Ovary (tissue), 10 donors: ENCODE measurements at regions of chr5 and their contacts with region 1.

Region 1: DNA sequence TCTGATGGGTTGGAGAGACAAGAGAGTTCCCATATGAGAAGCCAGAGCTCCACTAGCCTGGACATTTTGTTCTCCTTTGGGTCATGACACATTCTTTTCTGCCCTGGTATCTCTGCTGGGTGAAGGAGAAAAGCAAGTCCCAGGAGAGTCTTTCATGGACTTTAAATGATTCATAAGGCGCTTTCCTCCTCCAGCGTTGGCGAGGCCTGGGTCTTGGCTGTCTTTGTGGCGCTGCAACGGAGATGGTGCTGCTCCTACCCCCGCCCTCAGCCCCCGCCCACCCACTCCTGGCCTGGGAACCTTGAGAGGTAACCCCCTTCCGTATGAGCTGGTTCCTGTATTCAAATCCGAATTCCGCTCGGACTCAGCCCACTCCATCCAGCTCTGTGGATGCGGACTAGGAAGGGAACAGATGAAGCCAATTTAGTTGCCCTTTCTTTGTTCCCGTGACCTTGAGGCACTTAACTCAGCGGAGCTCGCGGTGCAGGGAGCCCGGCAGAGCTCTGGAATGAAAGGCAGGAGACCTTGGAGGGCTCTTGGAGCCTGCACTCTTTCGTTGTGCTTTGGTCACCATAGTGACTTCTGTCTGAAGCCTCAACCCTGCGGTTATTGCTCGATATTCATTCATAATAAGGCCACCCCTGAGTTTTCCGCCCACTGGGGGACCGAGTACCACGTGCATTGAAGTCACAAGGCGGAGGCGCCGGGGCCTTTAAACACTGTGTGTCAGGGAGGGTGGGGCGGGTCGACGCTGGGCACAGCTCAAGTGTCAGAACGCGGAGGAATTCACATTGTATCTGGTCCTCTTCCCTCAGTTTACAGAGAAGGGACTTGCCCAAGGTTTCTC is 14.0 kb upstream of the PWWP2A start:
- DNase-seq: peak; percentile 31 to 70 (median 44)
- H3K4me3 ChIP-seq: no peak overlapping the region
- H3K27ac ChIP-seq: peak overlapping the region in 1 of 2 donors; percentile 31
- H3K4me1 ChIP-seq: peaks cover 3% of the 10 kb centered on the region
- H3K27me3 ChIP-seq: no peaks in the 10 kb centered on the region
- CTCF ChIP-seq: no peak
- EP300 ChIP-seq: no peak
- POLR2A ChIP-seq: no peak

Region 2: GRCh38 chr5:160165137-160166068 is 32.1 kb after region 1 on chr5:
- intact Hi-C with region 1: loop called in 1 of 4 experiments (anchors 5 kb)
- DNase-seq: peak; percentile 89 to 96 (median 94)
- H3K4me3 ChIP-seq: no peak overlapping the region
- H3K27ac ChIP-seq: peak overlapping the region in 1 of 2 donors; percentile 64
- H3K4me1 ChIP-seq: peaks cover 24% of the 10 kb centered on the region
- H3K27me3 ChIP-seq: no peaks in the 10 kb centered on the region
- CTCF ChIP-seq: no peak
- EP300 ChIP-seq: no peak
- POLR2A ChIP-seq: no peak

Region 3: DNA sequence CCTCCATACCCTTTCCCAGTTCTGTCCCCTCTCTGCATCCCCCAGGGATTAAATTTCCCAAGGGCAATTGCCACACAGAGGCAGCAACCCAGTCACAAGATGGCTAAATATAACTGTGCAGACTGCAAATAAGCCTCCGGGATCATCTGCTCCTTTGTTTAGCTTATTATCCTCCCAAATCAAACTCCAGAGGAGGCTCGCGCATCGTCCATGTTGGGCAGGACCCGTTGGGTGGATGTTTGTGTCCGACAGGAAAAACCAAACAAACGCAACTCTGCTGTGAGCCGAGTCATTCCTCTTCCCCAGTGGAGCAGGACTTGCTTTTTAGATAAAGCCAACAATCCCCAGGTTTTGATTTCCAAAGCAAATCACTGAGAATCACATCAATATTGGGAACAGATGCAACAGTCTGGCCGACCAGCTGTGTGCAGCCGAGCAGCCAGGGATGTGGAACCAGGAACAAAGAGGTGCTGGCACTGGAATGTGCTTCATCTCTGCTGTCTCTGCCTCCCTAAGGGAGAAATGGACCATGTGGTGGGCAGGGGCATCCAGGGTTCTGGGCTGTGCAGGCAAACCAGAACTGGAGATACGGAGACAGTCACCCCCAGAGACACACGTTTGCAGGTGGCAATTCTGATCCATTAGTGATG is 378.1 kb after region 1 on chr5:
- intact Hi-C with region 1: no loop called
- DNase-seq: no peak
- H3K4me3 ChIP-seq: no peak overlapping the region
- H3K27ac ChIP-seq: no peak overlapping the region
- H3K4me1 ChIP-seq: no peaks in the 10 kb centered on the region
- H3K27me3 ChIP-seq: no peaks in the 10 kb centered on the region
- CTCF ChIP-seq: no peak
- EP300 ChIP-seq: no peak
- POLR2A ChIP-seq: no peak